Activated naive CD4-positive, alpha-beta T cell treated with anti-CD3 and anti-CD28 coated beads, Interleukin-2, amount 10 ng/mL, durations not matched to agents 7 days and 5 days (primary cell): ENCODE measurements at regions of chr10 and their contacts with region 1.

Region 1: DNA sequence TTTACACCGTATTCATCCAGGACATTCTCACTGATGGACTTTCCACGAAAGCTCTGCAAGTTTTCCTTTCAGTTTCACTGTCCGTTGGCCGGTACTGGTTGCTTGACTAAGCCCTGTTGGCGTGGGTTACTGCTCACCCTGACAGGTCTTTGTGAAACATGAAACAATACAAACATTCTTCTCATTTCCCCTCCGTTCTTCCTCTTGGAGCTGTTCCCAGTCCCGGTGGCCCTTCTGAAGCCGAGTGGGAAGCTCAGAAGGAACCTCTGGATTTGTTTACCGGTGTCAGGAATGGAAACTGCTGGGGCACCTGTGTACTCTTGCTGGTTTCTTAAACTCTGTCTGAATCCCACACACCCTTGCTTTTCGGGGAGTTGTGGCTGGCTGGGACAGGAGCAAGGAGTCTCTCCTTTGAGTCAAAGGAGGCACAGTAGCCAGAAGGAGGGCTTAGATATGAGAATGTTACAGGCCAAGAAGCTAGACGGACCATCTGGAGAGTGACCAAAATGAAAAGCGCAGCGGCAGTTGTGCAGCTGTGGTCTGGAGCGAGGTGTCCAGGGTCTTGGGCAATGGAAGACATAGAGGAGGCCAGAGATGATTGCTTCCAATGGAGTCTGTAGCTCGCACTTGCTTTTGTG is 45.7 kb downstream of the LYZL2 start:
- DNase-seq: no peak
- H3K4me3 Mint-ChIP-seq: no peak overlapping the region
- H3K27ac Mint-ChIP-seq: no peak overlapping the region
- H3K4me1 Mint-ChIP-seq: peaks cover 7% of the 10 kb centered on the region
- H3K27me3 Mint-ChIP-seq: peaks cover 28% of the 10 kb centered on the region

Region 2: GRCh38 chr10:30392564-30392990 is 191.3 kb before region 1 on chr10:
- CTCF ChIA-PET with region 1: interaction called, 30 read pairs
- DNase-seq: peak; percentile 83
- H3K4me3 Mint-ChIP-seq: no peak overlapping the region
- H3K27ac Mint-ChIP-seq: no peak overlapping the region
- H3K4me1 Mint-ChIP-seq: peaks cover 4% of the 10 kb centered on the region
- H3K27me3 Mint-ChIP-seq: peaks cover 33% of the 10 kb centered on the region

Region 3: GRCh38 chr10:30398788-30399187 is 185.1 kb before region 1 on chr10:
- CTCF ChIA-PET with region 1: interaction called, 20 read pairs
- DNase-seq: peak; percentile 31
- H3K4me3 Mint-ChIP-seq: no peak overlapping the region
- H3K27ac Mint-ChIP-seq: peak overlapping the region; percentile 17
- H3K4me1 Mint-ChIP-seq: peaks cover 32% of the 10 kb centered on the region
- H3K27me3 Mint-ChIP-seq: peaks cover 44% of the 10 kb centered on the region

Region 4: DNA sequence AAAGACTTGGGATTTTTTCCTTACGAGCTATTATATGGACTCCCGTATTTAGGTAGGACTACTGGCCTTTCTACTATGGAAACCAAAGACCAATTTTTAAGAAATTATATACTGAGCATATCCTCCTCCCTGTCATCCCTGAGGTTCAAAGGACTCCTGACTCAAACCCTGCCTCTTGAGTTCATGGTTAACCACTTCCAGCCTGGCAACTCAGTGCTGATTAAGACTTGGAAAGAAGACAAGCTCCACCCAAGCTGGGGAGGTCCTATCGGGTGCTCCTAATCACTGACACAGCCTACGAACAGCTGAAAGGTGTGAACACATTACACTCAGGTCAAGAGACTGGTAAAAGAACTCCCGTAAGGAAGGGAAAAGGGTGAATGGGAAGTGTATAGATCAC is 21.1 kb before region 1 on chr10:
- CTCF ChIA-PET with region 1: interaction called, 28 read pairs
- DNase-seq: peak; percentile 45
- H3K4me3 Mint-ChIP-seq: no peak overlapping the region
- H3K27ac Mint-ChIP-seq: no peak overlapping the region
- H3K4me1 Mint-ChIP-seq: peaks cover 7% of the 10 kb centered on the region
- H3K27me3 Mint-ChIP-seq: peaks cover 18% of the 10 kb centered on the region

Region 5: DNA sequence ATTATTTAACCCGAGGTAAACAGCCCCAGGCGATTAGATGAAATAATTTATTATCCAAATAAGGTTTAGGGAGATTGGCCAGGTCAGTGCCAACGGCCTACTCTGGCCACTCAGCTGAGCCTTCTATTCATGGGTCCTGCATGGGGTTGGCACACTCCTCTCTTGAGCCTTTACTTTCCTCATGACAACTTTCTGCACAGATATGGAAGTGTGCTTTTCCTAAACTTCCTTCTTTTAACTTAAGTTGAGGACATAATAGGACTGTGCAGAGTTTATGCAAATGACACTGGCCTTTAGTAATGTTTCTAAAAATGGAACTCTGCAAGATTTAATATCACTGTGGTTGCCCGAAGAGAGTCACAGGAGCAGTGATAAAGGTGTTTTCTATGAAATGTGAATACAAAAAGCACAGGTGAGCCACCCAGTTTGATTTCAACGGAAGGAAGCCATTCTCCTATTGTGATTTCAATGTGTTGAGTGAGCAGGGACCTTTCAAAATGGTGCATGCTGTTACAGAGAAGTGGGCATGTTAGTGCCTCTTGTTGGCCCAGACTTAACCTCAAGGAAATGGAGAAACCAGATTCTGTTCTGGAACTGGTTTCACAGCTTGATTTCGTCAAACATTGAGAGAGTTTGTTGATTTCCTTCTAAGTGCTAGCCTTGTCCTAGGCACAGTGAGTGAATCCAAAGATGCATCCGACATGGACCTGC is 10.0 kb before region 1 on chr10:
- CTCF ChIA-PET with region 1: interaction called, 10 read pairs
- DNase-seq: no peak
- H3K4me3 Mint-ChIP-seq: no peak overlapping the region
- H3K27ac Mint-ChIP-seq: no peak overlapping the region
- H3K4me1 Mint-ChIP-seq: no peaks in the 10 kb centered on the region
- H3K27me3 Mint-ChIP-seq: peaks cover 14% of the 10 kb centered on the region